ENCODE measurements at regions of chr11 and their contacts with region 1.

Region 1: GRCh38 chr11:107770551-107770951 is 58.7 kb upstream of the SLN start:
- DNase-seq: no peak
- H3K4me3 ChIP-seq: no peak overlapping the region
- H3K27ac ChIP-seq: no peak overlapping the region
- H3K4me1 ChIP-seq: no peaks in the 10 kb centered on the region
- H3K27me3 ChIP-seq: no peaks in the 10 kb centered on the region
- CTCF ChIP-seq: no peak
- EP300 ChIP-seq: no peak
- POLR2A ChIP-seq: no peak

Region 2: GRCh38 chr11:107550304-107550703 is 220.2 kb before region 1 on chr11:
- in situ Hi-C with region 1: no loop called
- intact Hi-C with region 1: loop called (anchors 10 kb)
- DNase-seq: no peak
- H3K4me3 ChIP-seq: no peak overlapping the region
- H3K27ac ChIP-seq: no peak overlapping the region
- H3K4me1 ChIP-seq: no peaks in the 10 kb centered on the region
- H3K27me3 ChIP-seq: no peaks in the 10 kb centered on the region
- CTCF ChIP-seq: no peak
- EP300 ChIP-seq: no peak
- POLR2A ChIP-seq: no peak

Region 3: GRCh38 chr11:107705027-107705426 is 65.5 kb before region 1 on chr11:
- in situ Hi-C with region 1: no loop called
- intact Hi-C with region 1: no loop called
- DNase-seq: no peak
- H3K4me3 ChIP-seq: no peak overlapping the region
- H3K27ac ChIP-seq: no peak overlapping the region
- H3K4me1 ChIP-seq: no peaks in the 10 kb centered on the region
- H3K27me3 ChIP-seq: peaks cover 5% of the 10 kb centered on the region
- CTCF ChIP-seq: no peak
- EP300 ChIP-seq: no peak
- POLR2A ChIP-seq: no peak

Region 4: GRCh38 chr11:107821199-107821927 is 50.8 kb after region 1 on chr11:
- in situ Hi-C with region 1: no loop called
- intact Hi-C with region 1: no loop called
- DNase-seq: no peak
- H3K4me3 ChIP-seq: no peak overlapping the region
- H3K27ac ChIP-seq: no peak overlapping the region
- H3K4me1 ChIP-seq: peaks cover 0 to 15% (median 4%) of the 10 kb centered on the region in 4 donors
- H3K27me3 ChIP-seq: no peaks in the 10 kb centered on the region
- CTCF ChIP-seq: no peak
- EP300 ChIP-seq: no peak
- POLR2A ChIP-seq: no peak

Measured in transverse colon (tissue), 4 donors.